Activated B cell treated with CpG ODN at 0.5 μM for 24 hours (primary cell): ENCODE measurements at regions of chr1 and their contacts with region 1.

Region 1: GRCh38 chr1:39105061-39105840 is 79.1 kb downstream of the NDUFS5 start:
- DNase-seq: peak; percentile 62
- ATAC-seq: peak; percentile 8
- H3K4me3 Mint-ChIP-seq: no peak overlapping the region
- H3K27ac Mint-ChIP-seq: no peak overlapping the region
- H3K4me1 Mint-ChIP-seq: peaks cover 33% of the 10 kb centered on the region
- H3K27me3 Mint-ChIP-seq: no peaks in the 10 kb centered on the region
- CTCF ChIP-seq: no peak

Region 2: GRCh38 chr1:39183503-39184353 is 78.5 kb after region 1 on chr1:
- CTCF ChIA-PET with region 1: interaction called, 86 read pairs
- POLR2A ChIA-PET with region 1: interaction called, 4 read pairs
- intact Hi-C with region 1: loop called (anchors 1 kb)
- DNase-seq: no peak
- ATAC-seq: peak; percentile 81
- H3K4me3 Mint-ChIP-seq: peak overlapping the region; percentile 21
- H3K27ac Mint-ChIP-seq: peak overlapping the region; percentile 76
- H3K4me1 Mint-ChIP-seq: peaks cover 47% of the 10 kb centered on the region
- H3K27me3 Mint-ChIP-seq: no peaks in the 10 kb centered on the region
- CTCF ChIP-seq: no peak